Posterior vena cava (tissue), 2 donors: ENCODE measurements at regions of chr12 and their contacts with region 1.

Region 1: DNA sequence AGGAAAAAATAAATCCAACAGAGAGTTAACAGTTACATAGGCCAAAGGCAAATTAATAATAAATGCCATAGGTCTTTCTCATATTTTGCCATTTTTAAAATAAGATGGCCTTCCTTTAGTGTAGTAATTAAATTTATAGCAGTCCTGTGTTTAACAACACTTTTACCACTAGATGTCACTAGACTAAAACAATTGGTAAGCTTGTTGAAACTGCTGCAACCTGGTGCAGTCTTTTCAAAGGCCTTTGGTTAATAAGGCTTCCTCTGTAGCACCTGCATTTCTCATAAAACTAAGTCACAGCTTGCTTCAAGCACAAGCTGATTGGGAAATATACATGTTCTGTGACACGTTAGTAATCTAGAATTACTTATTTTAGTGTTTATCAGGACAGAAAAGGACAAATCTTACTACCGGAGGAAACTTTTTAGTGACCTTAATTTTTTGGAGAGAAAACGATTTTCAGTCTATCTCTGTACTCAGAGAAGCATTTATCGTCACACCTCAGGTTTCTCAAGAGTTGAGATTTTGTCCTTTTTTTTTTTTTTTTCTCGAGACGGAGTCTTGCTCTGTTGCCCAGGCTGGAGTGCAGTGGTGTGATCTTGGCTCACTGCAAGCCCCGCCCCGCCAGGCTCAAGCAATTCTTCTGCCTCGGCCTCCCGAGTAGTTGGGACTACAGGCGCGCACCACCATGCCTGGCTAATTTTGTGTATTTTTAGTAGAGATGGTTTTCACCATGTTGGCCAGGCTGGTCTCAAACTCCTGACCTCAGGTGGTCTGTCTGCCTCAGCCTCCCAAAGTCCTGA is 20.0 kb downstream of the BORCS5 start:
- DNase-seq: no peak

Region 2: DNA sequence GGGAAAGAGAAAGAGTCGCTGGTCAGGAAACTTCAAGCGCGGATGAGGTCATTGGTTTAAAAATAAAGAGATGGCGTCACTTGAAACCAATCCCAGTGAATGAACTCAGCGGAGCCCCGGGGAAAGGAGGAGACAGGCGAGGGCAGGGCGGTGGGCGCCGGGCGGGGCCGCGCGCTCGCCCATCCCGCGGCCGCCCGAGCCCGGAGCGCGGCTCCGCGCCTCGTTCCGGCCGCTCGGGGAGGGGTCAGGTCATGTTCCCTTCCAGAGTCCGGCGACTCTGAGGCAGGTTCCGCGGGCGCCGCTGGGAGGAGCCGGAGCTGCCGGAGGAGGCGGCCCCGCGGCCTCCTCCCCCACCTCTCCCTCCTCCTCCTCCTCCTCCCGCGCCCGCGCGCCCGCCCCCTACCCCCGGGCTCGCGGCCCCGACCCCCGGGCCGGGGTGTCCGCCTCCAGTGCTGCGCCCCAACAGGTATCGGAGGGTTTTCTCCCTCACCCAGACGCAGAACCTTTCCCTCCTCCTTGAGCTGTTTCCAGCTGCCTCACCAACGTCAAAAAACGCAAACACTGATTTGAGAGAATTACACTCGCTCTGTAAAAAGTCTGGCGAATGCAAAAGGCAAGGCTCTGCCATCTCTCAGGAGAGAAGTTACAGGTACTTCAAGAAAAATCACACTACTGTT is 185.9 kb after region 1 on chr12 and contains the start of gene DUSP16:
- intact Hi-C with region 1: loop called (anchors 10 kb)
- DNase-seq: peak; percentile 96
- total RNA-seq, gene DUSP16: 14.8 to 19.5 TPM

Region 3: DNA sequence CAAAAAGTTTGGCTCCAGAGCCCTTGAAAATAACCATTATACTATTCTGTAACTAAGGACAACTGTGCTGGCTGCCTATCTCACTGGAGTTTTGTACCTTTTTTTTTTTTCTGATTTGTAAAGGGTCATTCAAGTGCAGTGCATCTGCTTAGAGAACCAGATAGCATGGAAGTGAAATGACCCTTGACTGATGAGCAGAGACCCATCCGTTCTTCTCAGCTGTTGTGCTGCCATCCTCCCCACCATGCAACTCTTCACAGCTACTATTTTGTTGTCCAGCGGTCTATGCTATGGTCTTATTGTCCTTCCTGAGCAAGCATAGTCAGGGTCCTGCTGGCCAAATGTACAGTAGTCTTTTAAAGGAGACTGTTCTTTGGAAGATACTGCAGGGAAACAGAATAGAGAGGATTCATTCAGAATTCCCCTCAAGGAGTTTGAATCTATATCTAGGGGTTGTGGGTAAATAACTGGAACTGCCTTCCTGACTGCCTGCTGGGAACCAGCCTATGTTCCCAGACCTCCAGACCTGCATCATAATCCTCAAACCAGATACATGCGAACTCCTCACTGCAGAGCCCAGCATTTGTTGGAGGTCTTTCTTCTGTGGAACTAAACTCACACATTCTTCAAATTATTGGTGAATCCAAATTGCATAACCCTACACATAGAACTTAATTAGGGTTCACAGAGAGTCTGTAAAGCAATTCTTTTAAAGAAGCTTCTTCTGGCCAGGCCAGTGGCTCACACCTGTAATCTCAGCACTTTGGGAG is 278.0 kb after region 1 on chr12:
- intact Hi-C with region 1: loop called in 1 of 2 experiments (anchors 5 kb)
- DNase-seq: no peak

Region 4: GRCh38 chr12:12704593-12705230 is 327.9 kb after region 1 on chr12:
- intact Hi-C with region 1: loop called in 1 of 2 experiments (anchors 5 kb)
- DNase-seq: no peak